ENCODE measurements at regions of chr10 and their contacts with region 1.

Region 1: GRCh38 chr10:88990384-88991160 is at the start of gene FAS:
- DNase-seq: peak; percentile 44 to 95 (median 79)
- ATAC-seq: peak; percentile 72
- H3K4me3 ChIP-seq: peak within 1 kb of the TSS; percentile 79 to 92
- H3K4me3 Mint-ChIP-seq: peak within 1 kb of the TSS; percentile 98
- H3K27ac ChIP-seq: peak within 1 kb of the TSS; percentile 52 to 78
- H3K27ac Mint-ChIP-seq: peak within 1 kb of the TSS; percentile 97
- H3K4me1 ChIP-seq: peaks cover 41% of the 10 kb centered on the region
- H3K4me1 Mint-ChIP-seq: peaks cover 70% of the 10 kb centered on the region
- H3K27me3 ChIP-seq: no peaks in the 10 kb centered on the region
- H3K27me3 Mint-ChIP-seq: no peaks in the 10 kb centered on the region
- CTCF ChIP-seq: no peak
- total RNA-seq, gene FAS: 27.7 to 28.9 TPM

Region 2: DNA sequence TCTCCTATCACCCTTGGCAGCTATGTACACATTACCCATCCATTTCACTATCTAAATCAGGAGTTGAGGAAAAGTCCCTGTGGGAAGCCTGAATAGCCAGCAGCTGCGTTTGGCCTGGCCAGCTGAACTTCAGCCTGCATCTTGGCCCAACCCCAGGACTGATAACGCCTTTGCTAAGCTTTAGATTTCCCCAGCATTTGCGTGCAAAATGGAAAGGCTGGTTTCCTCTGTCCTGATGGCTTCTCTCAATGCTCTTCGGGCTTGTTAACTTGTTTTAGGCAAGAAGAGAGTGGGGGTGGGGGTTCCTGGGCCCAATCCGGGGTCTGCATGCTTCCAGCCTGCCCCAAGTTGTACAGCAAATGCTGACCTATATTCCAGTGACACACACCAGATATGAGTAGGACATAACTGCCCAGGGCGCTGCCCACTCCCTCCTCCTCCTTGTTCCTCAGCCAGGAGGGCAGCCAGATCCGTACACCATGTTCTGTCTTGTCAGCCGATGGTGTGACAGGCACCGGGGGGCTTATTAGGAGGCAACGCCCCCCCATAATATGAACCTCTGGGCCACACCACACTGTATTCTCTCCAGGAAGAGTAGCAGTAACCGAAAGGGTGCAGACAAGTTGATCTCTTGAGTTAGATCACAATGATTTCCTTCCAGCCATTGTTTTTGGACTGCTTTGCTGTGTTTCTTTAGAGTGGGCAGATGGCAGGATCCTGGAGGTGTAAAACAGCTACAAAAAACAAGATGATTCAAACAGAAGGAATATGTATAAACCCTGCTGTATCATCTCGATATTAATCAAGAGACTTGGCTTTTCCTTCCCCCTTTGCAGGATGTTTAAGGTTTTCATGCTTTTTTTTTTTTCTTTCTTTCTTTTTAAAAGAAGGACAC is 746.5 kb before region 1 on chr10:
- CTCF ChIA-PET with region 1: no interaction called
- POLR2A ChIA-PET with region 1: no interaction called
- intact Hi-C with region 1: no loop called
- DNase-seq: no peak
- ATAC-seq: no peak
- H3K4me3 ChIP-seq: no peak overlapping the region
- H3K4me3 Mint-ChIP-seq: no peak overlapping the region
- H3K27ac ChIP-seq: no peak overlapping the region
- H3K27ac Mint-ChIP-seq: no peak overlapping the region
- H3K4me1 ChIP-seq: peaks cover 4% of the 10 kb centered on the region
- H3K4me1 Mint-ChIP-seq: peaks cover 10% of the 10 kb centered on the region
- H3K27me3 ChIP-seq: no peaks in the 10 kb centered on the region
- H3K27me3 Mint-ChIP-seq: no peaks in the 10 kb centered on the region
- CTCF ChIP-seq: no peak

Region 3: DNA sequence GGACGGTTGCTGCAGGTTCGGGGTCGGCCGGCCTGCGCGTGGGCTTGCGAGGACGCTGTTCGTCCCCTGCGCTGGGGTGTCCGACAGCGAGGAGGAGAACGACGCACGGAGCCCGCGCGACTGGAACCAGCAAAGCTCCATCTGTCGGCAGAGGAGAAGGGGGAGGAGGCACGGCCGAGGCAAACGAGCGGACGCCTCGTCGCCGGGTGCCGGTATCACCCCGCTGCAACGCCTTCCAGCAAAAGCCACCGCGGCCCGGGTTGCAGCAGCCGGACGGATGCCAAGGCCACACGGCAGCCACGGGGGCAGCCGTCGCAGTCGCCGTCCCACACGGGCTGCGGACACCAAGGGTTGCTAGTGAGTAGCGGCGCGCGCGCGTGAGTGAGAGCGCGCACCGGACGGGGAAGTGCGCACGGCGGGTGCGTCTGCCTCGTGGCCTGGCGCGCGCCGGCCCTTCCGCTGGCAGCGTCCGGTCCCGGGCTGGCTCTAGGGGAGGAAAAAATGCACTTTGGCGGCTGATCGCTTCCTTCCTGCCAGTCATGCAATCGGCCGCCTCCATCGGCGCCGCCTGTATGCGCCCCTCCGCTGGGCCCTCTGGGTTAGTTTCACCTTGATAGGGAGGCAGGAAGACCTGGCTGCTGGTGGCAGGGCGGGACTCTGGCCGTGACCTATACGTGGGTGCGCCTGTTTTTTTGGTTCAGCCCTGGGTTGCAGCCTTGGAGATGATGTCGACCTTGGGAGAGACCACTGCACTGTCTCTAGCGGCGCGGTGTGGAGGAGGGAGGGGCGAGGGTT is 110.1 kb before region 1 on chr10:
- CTCF ChIA-PET with region 1: no interaction called
- POLR2A ChIA-PET with region 1: interaction called, 6 read pairs
- intact Hi-C with region 1: loop called in 1 of 2 experiments (anchors 2 kb)
- DNase-seq: peak; percentile 43 to 86 (median 70)
- ATAC-seq: peak; percentile 69
- H3K4me3 ChIP-seq: peak overlapping the region; percentile 81 to 89
- H3K4me3 Mint-ChIP-seq: peak overlapping the region; percentile 98
- H3K27ac ChIP-seq: peak overlapping the region; percentile 76 to 79
- H3K27ac Mint-ChIP-seq: peak overlapping the region; percentile 96
- H3K4me1 ChIP-seq: peaks cover 37% of the 10 kb centered on the region
- H3K4me1 Mint-ChIP-seq: peaks cover 61% of the 10 kb centered on the region
- H3K27me3 ChIP-seq: no peaks in the 10 kb centered on the region
- H3K27me3 Mint-ChIP-seq: no peaks in the 10 kb centered on the region
- CTCF ChIP-seq: peak; percentile 17

Region 4: DNA sequence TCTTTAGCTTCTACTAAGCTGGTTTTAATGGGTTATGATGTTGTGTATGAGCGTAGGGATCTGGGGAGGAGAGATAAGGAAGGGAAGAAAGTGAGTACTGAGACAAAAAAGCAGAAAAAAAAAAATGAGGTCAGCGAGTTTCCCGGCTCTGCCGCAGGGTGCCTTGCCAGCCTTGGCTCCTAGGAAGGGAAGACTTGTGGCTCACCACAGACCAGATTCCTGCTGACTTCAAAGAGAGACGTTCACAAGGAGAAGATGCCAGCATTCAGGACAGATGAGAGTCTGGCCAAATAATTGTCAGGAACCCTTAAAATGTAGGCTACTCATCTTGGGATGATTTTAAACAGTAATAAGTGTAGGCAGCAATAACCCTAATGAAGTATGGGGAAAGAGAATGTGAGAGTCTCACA is 11.4 kb before region 1 on chr10:
- CTCF ChIA-PET with region 1: interaction called, 5 read pairs
- POLR2A ChIA-PET with region 1: interaction called, 9 read pairs
- intact Hi-C with region 1: loop called (anchors 1 to 2 kb)
- DNase-seq: no peak
- ATAC-seq: no peak
- H3K4me3 ChIP-seq: no peak overlapping the region
- H3K4me3 Mint-ChIP-seq: no peak overlapping the region
- H3K27ac ChIP-seq: no peak overlapping the region
- H3K27ac Mint-ChIP-seq: no peak overlapping the region
- H3K4me1 ChIP-seq: peaks cover 7% of the 10 kb centered on the region
- H3K4me1 Mint-ChIP-seq: peaks cover 25% of the 10 kb centered on the region
- H3K27me3 ChIP-seq: no peaks in the 10 kb centered on the region
- H3K27me3 Mint-ChIP-seq: no peaks in the 10 kb centered on the region
- CTCF ChIP-seq: no peak

Region 5: DNA sequence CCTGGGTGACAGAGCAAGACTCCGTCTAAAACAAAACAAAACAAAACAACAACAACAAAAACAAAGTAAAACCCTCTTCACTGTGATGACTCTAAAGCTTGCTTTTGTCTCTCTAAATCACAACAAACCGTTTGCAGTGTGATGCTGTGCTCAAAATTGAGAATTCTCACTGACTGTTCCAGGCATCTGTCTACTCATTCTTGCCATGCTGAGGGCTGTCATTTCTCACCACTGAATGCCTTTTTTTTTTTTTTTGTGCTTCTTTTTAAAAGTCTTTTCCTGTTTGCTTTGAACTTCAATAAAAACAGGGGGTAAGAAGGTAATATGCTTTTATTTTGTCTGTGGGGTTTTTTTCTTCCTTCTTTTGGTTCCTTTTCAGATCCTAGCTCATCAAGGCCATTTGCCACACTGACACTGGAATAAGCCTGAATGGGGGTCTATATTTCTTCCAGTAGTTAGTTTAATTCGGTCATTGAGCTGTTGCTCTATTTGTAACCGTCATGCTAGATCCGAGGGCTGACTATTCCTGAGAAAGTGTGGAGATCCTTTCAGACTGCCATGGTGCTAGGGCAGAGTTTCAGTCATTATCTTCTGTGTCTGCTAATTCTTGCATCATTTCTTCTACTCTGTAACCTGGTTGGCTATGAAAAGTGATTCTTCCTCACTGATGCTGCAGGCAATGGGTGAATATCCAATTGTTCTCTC is 10.6 kb after region 1 on chr10:
- CTCF ChIA-PET with region 1: no interaction called
- POLR2A ChIA-PET with region 1: interaction called, 14 read pairs
- intact Hi-C with region 1: loop called in 1 of 2 experiments (anchors 1 kb)
- DNase-seq: peak in 4 of 9 experiments; percentile 27 to 64 (median 37)
- ATAC-seq: peak; percentile 56
- H3K4me3 ChIP-seq: peak overlapping the region in 1 of 2 experiments; percentile 38
- H3K4me3 Mint-ChIP-seq: peak overlapping the region; percentile 69
- H3K27ac ChIP-seq: peak overlapping the region; percentile 22 to 60
- H3K27ac Mint-ChIP-seq: peak overlapping the region; percentile 60
- H3K4me1 ChIP-seq: peaks cover 34% of the 10 kb centered on the region
- H3K4me1 Mint-ChIP-seq: peaks cover 55% of the 10 kb centered on the region
- H3K27me3 ChIP-seq: no peaks in the 10 kb centered on the region
- H3K27me3 Mint-ChIP-seq: no peaks in the 10 kb centered on the region
- CTCF ChIP-seq: no peak

Region 6: DNA sequence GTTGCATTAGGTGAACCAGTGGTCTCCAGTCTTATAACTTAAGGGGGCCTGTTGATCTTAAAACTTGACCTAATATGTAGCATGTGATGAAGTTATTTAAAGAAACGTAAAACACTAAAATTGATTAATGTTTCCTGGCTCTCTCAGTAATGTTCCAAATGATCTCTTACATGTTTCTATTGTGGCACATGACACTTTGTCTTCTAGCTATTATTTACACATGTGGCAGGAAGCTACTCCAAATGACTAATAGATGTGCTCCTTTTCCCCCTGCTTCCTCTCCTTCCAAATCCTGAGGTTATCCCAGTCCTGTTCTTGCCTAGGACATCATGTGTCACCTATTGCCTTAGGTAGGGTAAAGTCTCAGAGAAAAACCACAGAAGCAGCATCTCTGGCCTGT is 89.4 kb after region 1 on chr10:
- CTCF ChIA-PET with region 1: no interaction called
- POLR2A ChIA-PET with region 1: no interaction called
- intact Hi-C with region 1: loop called in 1 of 2 experiments (anchors 5 kb)
- DNase-seq: no peak
- ATAC-seq: no peak
- H3K4me3 ChIP-seq: no peak overlapping the region
- H3K4me3 Mint-ChIP-seq: no peak overlapping the region
- H3K27ac ChIP-seq: no peak overlapping the region
- H3K27ac Mint-ChIP-seq: no peak overlapping the region
- H3K4me1 ChIP-seq: peaks cover 11% of the 10 kb centered on the region
- H3K4me1 Mint-ChIP-seq: peaks cover 11% of the 10 kb centered on the region
- H3K27me3 ChIP-seq: no peaks in the 10 kb centered on the region
- H3K27me3 Mint-ChIP-seq: peaks cover 2% of the 10 kb centered on the region
- CTCF ChIP-seq: no peak

Region 7: GRCh38 chr10:89207181-89207800 is 216.7 kb after region 1 on chr10 and contains the start of gene CH25H:
- CTCF ChIA-PET with region 1: interaction called, 3 read pairs
- POLR2A ChIA-PET with region 1: interaction called, 10 read pairs
- intact Hi-C with region 1: no loop called
- DNase-seq: peak in 6 of 9 experiments; percentile 30 to 61 (median 50)
- ATAC-seq: peak; percentile 39
- H3K4me3 ChIP-seq: peak within 1 kb of the TSS; percentile 51 to 67
- H3K4me3 Mint-ChIP-seq: peak within 1 kb of the TSS; percentile 81
- H3K27ac ChIP-seq: no peak within 1 kb of the TSS
- H3K27ac Mint-ChIP-seq: peak within 1 kb of the TSS; percentile 62
- H3K4me1 ChIP-seq: peaks cover 19% of the 10 kb centered on the region
- H3K4me1 Mint-ChIP-seq: peaks cover 16% of the 10 kb centered on the region
- H3K27me3 ChIP-seq: peaks cover 12 to 28% of the 10 kb centered on the region in 2 experiments
- H3K27me3 Mint-ChIP-seq: peaks cover 47% of the 10 kb centered on the region
- CTCF ChIP-seq: no peak
- total RNA-seq, gene CH25H: 0.44 to 0.54 TPM

Region 8: GRCh38 chr10:89391917-89392756 is 401.6 kb after region 1 on chr10 and contains the start of gene IFIT1:
- CTCF ChIA-PET with region 1: no interaction called
- POLR2A ChIA-PET with region 1: interaction called, 3 read pairs
- intact Hi-C with region 1: loop called in 1 of 2 experiments (anchors 10 kb)
- DNase-seq: peak in 8 of 9 experiments; percentile 23 to 92 (median 54)
- ATAC-seq: peak; percentile 93
- H3K4me3 ChIP-seq: peak within 1 kb of the TSS; percentile 68 to 79
- H3K4me3 Mint-ChIP-seq: peak within 1 kb of the TSS; percentile 90
- H3K27ac ChIP-seq: peak within 1 kb of the TSS; percentile 65 to 80
- H3K27ac Mint-ChIP-seq: peak within 1 kb of the TSS; percentile 88
- H3K4me1 ChIP-seq: peaks cover 15% of the 10 kb centered on the region
- H3K4me1 Mint-ChIP-seq: peaks cover 35% of the 10 kb centered on the region
- H3K27me3 ChIP-seq: no peaks in the 10 kb centered on the region
- H3K27me3 Mint-ChIP-seq: no peaks in the 10 kb centered on the region
- CTCF ChIP-seq: no peak
- total RNA-seq, gene IFIT1: 1.9 to 2.5 TPM

Measured in CD8-positive, alpha-beta T cell (primary cell).